ENCODE measurements at regions of chr20 and their contacts with region 1.

Region 1: GRCh38 chr20:51541189-51542032 is 1.1 kb downstream of the NFATC2 start:
- DNase-seq: peak; percentile 87
- H3K4me3 Mint-ChIP-seq: peak overlapping the region; percentile 96
- H3K27ac Mint-ChIP-seq: peak overlapping the region; percentile 98
- H3K4me1 Mint-ChIP-seq: peaks cover 50% of the 10 kb centered on the region
- H3K27me3 Mint-ChIP-seq: peaks cover 16% of the 10 kb centered on the region

Region 2: GRCh38 chr20:51059862-51060261 is 481.5 kb before region 1 on chr20:
- intact Hi-C with region 1: loop called (anchors 5 kb)
- DNase-seq: no peak
- H3K4me3 Mint-ChIP-seq: no peak overlapping the region
- H3K27ac Mint-ChIP-seq: no peak overlapping the region
- H3K4me1 Mint-ChIP-seq: peaks cover 38% of the 10 kb centered on the region
- H3K27me3 Mint-ChIP-seq: peaks cover 21% of the 10 kb centered on the region

Region 3: GRCh38 chr20:51447097-51447771 is 94.2 kb before region 1 on chr20:
- intact Hi-C with region 1: no loop called
- DNase-seq: no peak
- H3K4me3 Mint-ChIP-seq: no peak overlapping the region
- H3K27ac Mint-ChIP-seq: peak overlapping the region; percentile 28
- H3K4me1 Mint-ChIP-seq: peaks cover 22% of the 10 kb centered on the region
- H3K27me3 Mint-ChIP-seq: no peaks in the 10 kb centered on the region

Region 4: GRCh38 chr20:51469578-51470498 is 71.6 kb before region 1 on chr20:
- intact Hi-C with region 1: loop called (anchors 2 kb)
- DNase-seq: no peak
- H3K4me3 Mint-ChIP-seq: peak overlapping the region; percentile 18
- H3K27ac Mint-ChIP-seq: peak overlapping the region; percentile 77
- H3K4me1 Mint-ChIP-seq: peaks cover 43% of the 10 kb centered on the region
- H3K27me3 Mint-ChIP-seq: no peaks in the 10 kb centered on the region

Region 5: DNA sequence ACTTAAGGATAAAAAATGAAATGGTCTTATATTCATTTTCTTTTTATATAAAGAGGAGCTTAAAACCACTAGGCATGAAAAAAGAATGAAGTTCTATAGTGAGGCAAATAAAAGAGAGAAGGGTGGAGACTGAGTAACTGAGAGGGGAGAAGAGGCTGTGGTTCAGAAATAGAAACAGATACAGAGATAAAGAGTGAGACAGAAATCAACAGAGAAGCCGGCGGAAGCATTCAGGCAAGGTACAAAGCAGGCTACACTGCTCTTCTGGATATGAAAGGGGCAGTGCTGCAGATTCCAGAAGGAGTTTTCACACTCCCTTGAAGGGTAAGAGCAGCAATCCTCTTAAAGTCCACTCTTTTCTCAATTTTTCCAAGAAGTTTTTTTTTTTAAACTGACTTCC is 28.8 kb before region 1 on chr20:
- intact Hi-C with region 1: loop called (anchors 1 kb)
- DNase-seq: peak; percentile 28
- H3K4me3 Mint-ChIP-seq: no peak overlapping the region
- H3K27ac Mint-ChIP-seq: peak overlapping the region; percentile 82
- H3K4me1 Mint-ChIP-seq: peaks cover 70% of the 10 kb centered on the region
- H3K27me3 Mint-ChIP-seq: no peaks in the 10 kb centered on the region

Region 6: DNA sequence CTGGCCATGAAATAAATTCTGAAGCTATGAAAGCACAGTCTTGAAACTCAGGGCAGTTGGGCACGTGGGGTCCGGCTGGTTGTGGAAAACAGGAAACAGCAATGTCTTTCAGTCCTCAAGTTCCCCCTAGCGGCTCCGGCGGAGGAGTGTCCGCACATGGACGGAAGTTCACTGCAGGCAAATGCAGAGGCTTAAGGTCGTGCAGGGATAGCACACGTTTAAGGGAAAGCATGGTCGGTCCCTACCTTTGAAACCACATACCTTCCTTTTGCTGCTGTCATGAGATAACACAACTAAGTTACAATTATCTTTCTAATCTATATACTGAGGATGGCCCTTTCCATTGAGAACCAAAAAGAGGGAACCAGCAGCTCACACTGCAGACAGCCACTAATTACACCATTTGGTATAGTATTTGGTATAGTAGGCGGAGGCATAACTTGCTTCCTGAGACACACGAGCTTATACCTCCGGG is 53.7 kb after region 1 on chr20:
- intact Hi-C with region 1: loop called (anchors 2 kb)
- DNase-seq: peak; percentile 72
- H3K4me3 Mint-ChIP-seq: peak overlapping the region; percentile 17
- H3K27ac Mint-ChIP-seq: peak overlapping the region; percentile 65
- H3K4me1 Mint-ChIP-seq: peaks cover 46% of the 10 kb centered on the region
- H3K27me3 Mint-ChIP-seq: no peaks in the 10 kb centered on the region

Measured in activated T-helper 2 cell treated with anti-CD3 and anti-CD28 coated beads, Interferon-gamma antibody, Interleukin-2, Interleukin-4, amounts not matched to agents 10 μg/mL and 5 μg/mL and 100 μg/mL, durations not matched to agents 14 hours and 24 hours and 36 hours (primary cell).